PC-3 (cell line): ENCODE measurements at regions of chr1 and their contacts with region 1.

Region 1: GRCh38 chr1:200415693-200416593 is 6.1 kb upstream of the ZNF281 start:
- DNase-seq: peak; percentile 100
- ATAC-seq: peak; percentile 94
- H3K4me3 ChIP-seq: peak overlapping the region; percentile 51
- H3K27ac ChIP-seq: peak overlapping the region; percentile 92
- H3K4me1 ChIP-seq: peaks cover 36% of the 10 kb centered on the region
- H3K27me3 ChIP-seq: no peaks in the 10 kb centered on the region
- CTCF ChIP-seq: no peak

Region 2: GRCh38 chr1:200372080-200372884 is 43.7 kb before region 1 on chr1:
- CTCF ChIA-PET with region 1: no interaction called
- POLR2A ChIA-PET with region 1: interaction called, 27 read pairs
- intact Hi-C with region 1: no loop called
- DNase-seq: peak; percentile 99
- ATAC-seq: peak; percentile 95
- H3K4me3 ChIP-seq: peak overlapping the region; percentile 31; the same call in 1 of the 2 replicates
- H3K27ac ChIP-seq: peak overlapping the region; percentile 72
- H3K4me1 ChIP-seq: peaks cover 60% of the 10 kb centered on the region
- H3K27me3 ChIP-seq: no peaks in the 10 kb centered on the region
- CTCF ChIP-seq: no peak

Region 3: GRCh38 chr1:200437556-200438203 is 21.7 kb after region 1 on chr1:
- CTCF ChIA-PET with region 1: interaction called, 10 read pairs
- POLR2A ChIA-PET with region 1: interaction called, 9 read pairs
- intact Hi-C with region 1: loop called (anchors 2 kb)
- DNase-seq: peak; percentile 27
- ATAC-seq: no peak; the same call in 1 of the 2 replicates
- H3K4me3 ChIP-seq: peak overlapping the region; percentile 8; the same call in 1 of the 2 replicates
- H3K27ac ChIP-seq: peak overlapping the region; percentile 13; the same call in 1 of the 2 replicates
- H3K4me1 ChIP-seq: peaks cover 35% of the 10 kb centered on the region
- H3K27me3 ChIP-seq: no peaks in the 10 kb centered on the region
- CTCF ChIP-seq: no peak